Mammary epithelial cell (primary cell): ENCODE measurements at regions of chr2 and their contacts with region 1.

Region 1: GRCh38 chr2:98720286-98720685 is 10.6 kb downstream of the MGAT4A start:
- DNase-seq: no peak
- H3K4me3 ChIP-seq: no peak overlapping the region
- H3K27ac ChIP-seq: no peak overlapping the region
- H3K4me1 ChIP-seq: no peaks in the 10 kb centered on the region
- H3K27me3 ChIP-seq: no peaks in the 10 kb centered on the region
- CTCF ChIP-seq: no peak

Region 2: DNA sequence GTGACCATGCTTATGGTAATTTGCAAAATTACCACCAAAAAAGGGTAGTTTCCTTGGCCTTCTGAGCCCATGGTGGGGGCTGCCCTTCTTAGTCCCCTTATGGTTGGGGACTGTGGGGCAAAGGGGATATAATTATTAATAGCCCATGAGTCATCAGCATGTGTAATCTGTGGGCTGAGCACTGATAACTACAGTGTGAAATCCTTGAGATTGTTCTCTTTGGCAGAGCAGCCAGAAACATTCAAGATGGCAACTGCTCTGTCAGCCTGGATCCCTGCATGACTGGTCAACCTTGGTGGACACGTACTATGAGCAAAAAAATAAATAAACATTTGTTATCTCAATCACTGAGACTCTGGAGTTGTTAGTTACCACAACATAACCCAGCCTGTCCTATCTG is 50.6 kb before region 1 on chr2:
- CTCF ChIA-PET with region 1: no interaction called
- dilution Hi-C with region 1: loop called (anchors 5 kb)
- in situ Hi-C with region 1: no loop called
- intact Hi-C with region 1: no loop called
- DNase-seq: no peak
- H3K4me3 ChIP-seq: no peak overlapping the region
- H3K27ac ChIP-seq: no peak overlapping the region
- H3K4me1 ChIP-seq: peaks cover 6% of the 10 kb centered on the region
- H3K27me3 ChIP-seq: no peaks in the 10 kb centered on the region
- CTCF ChIP-seq: no peak

Region 3: DNA sequence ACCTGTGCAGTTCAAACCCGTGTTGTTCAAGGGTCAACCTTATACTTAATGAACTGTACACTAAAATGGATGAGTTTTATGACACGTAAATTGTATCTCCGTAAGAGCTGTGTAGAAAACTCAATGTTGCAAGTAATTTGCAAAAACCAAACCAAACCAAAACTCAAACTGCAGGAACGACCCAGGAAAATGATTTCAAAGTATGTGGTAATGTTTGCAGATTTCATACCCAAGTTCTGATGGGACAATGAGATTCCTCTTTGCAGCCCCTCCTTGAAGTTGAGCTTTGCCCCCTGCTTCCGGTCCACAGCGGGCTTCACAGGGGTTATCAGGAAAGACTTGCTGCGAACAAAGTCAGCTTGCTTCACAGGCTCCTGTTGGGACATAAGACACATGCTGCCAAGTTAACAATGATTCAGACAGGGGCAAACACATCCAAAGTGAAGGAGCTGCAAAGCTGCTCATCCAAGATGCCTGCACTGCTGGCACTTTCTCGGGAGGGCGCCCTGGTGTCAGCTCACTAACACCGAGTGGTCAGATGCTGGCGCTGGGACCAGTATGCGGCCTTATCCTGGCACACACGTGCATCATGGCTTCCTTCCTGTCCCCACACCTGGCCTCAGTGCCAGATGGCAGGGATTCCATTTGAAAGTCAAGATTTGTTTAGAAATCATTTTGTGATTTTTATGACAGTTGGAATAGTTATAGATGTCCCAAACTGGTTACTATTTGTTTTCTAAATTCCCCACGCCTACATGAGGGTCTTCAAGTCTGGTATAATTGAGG is 75.8 kb after region 1 on chr2:
- CTCF ChIA-PET with region 1: no interaction called
- dilution Hi-C with region 1: no loop called
- in situ Hi-C with region 1: no loop called
- intact Hi-C with region 1: no loop called
- DNase-seq: no peak
- H3K4me3 ChIP-seq: no peak overlapping the region
- H3K27ac ChIP-seq: no peak overlapping the region
- H3K4me1 ChIP-seq: peaks cover 30% of the 10 kb centered on the region
- H3K27me3 ChIP-seq: no peaks in the 10 kb centered on the region
- CTCF ChIP-seq: no peak

Region 4: GRCh38 chr2:99404795-99405669 is 684.7 kb after region 1 on chr2:
- CTCF ChIA-PET with region 1: no interaction called
- dilution Hi-C with region 1: no loop called
- in situ Hi-C with region 1: no loop called
- intact Hi-C with region 1: no loop called
- DNase-seq: no peak
- H3K4me3 ChIP-seq: no peak overlapping the region
- H3K27ac ChIP-seq: no peak overlapping the region
- H3K4me1 ChIP-seq: no peaks in the 10 kb centered on the region
- H3K27me3 ChIP-seq: no peaks in the 10 kb centered on the region
- CTCF ChIP-seq: no peak